Left ventricle myocardium superior (tissue), 1 donor: ENCODE measurements at regions of chr10 and their contacts with region 1.

Region 1: GRCh38 chr10:30413996-30414576 is 19.9 kb upstream of the MAP3K8 start:
- DNase-seq: no peak
- ATAC-seq: peak; percentile 74

Region 2: DNA sequence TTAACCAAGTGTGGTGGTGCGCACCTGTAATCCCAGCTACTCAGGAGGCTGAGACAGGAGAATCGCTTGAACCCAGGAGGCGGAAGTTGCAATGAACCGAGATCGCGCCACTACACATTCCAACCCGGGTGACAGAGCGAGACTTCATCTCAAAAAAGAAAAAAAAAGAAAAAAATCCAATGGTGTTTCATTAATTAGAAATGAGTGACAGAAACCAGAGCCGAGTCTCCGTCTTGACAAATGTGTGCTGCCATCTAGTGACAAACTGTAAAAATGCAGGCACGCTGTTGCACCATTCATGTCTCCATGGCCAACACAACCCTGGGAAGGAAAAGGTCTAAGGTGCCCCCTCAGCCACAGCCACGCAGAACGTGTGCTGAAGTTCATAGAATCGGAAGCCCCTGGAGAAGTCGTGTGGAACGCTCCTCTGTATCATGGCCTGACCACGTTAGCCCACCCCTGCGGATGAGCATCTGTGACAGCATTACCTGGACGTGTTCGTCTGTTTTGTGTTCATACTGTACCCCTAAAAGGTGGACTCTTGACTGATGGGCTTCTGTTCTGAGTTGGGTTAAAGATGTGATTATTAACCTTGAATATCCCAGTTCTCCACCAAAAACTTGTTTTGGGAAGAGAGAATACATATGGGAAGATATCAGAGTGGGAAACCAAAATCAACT is 120.5 kb after region 1 on chr10:
- intact Hi-C with region 1: loop called (anchors 5 kb)
- DNase-seq: peak; percentile 46
- ATAC-seq: peak; percentile 76